Activated T-helper 1 cell treated with anti-CD3 and anti-CD28 coated beads, Interleukin-12 subunit alpha, Interleukin-12 subunit beta, Interleukin-2, Interleukin-4 antibody, amounts not matched to agents 30 ng/mL and 10 ng/mL and 1 ng/mL, durations not matched to agents 14 hours and 24 hours and 36 hours (primary cell): ENCODE measurements at regions of chr11 and their contacts with region 1.

Region 1: GRCh38 chr11:65418711-65419459 is 3.7 kb upstream of the NEAT1 start:
- DNase-seq: peak; percentile 88
- H3K4me3 Mint-ChIP-seq: peak overlapping the region; percentile 99
- H3K27ac Mint-ChIP-seq: peak overlapping the region; percentile 100
- H3K4me1 Mint-ChIP-seq: peaks cover 57% of the 10 kb centered on the region
- H3K27me3 Mint-ChIP-seq: peaks cover 9% of the 10 kb centered on the region

Region 2: GRCh38 chr11:65354265-65355012 is 64.4 kb before region 1 on chr11 and contains the start of gene TIGD3:
- intact Hi-C with region 1: loop called (anchors 1 kb)
- DNase-seq: peak; percentile 93
- H3K4me3 Mint-ChIP-seq: peak within 1 kb of the TSS; percentile 89
- H3K27ac Mint-ChIP-seq: peak within 1 kb of the TSS; percentile 81
- H3K4me1 Mint-ChIP-seq: peaks cover 8% of the 10 kb centered on the region
- H3K27me3 Mint-ChIP-seq: peaks cover 16% of the 10 kb centered on the region
- total RNA-seq, gene TIGD3: 1.1 TPM in 2 replicates

Region 3: GRCh38 chr11:65432686-65433582 is 14.0 kb after region 1 on chr11:
- intact Hi-C with region 1: loop called (anchors 1 kb)
- DNase-seq: no peak
- H3K4me3 Mint-ChIP-seq: peak overlapping the region; percentile 45
- H3K27ac Mint-ChIP-seq: peak overlapping the region; percentile 75
- H3K4me1 Mint-ChIP-seq: peaks cover 91% of the 10 kb centered on the region
- H3K27me3 Mint-ChIP-seq: no peaks in the 10 kb centered on the region

Region 4: GRCh38 chr11:65497141-65498041 is 78.5 kb after region 1 on chr11:
- intact Hi-C with region 1: loop called (anchors 1 kb)
- DNase-seq: peak; percentile 98
- H3K4me3 Mint-ChIP-seq: no peak overlapping the region
- H3K27ac Mint-ChIP-seq: no peak overlapping the region
- H3K4me1 Mint-ChIP-seq: peaks cover 37% of the 10 kb centered on the region
- H3K27me3 Mint-ChIP-seq: no peaks in the 10 kb centered on the region

Region 5: DNA sequence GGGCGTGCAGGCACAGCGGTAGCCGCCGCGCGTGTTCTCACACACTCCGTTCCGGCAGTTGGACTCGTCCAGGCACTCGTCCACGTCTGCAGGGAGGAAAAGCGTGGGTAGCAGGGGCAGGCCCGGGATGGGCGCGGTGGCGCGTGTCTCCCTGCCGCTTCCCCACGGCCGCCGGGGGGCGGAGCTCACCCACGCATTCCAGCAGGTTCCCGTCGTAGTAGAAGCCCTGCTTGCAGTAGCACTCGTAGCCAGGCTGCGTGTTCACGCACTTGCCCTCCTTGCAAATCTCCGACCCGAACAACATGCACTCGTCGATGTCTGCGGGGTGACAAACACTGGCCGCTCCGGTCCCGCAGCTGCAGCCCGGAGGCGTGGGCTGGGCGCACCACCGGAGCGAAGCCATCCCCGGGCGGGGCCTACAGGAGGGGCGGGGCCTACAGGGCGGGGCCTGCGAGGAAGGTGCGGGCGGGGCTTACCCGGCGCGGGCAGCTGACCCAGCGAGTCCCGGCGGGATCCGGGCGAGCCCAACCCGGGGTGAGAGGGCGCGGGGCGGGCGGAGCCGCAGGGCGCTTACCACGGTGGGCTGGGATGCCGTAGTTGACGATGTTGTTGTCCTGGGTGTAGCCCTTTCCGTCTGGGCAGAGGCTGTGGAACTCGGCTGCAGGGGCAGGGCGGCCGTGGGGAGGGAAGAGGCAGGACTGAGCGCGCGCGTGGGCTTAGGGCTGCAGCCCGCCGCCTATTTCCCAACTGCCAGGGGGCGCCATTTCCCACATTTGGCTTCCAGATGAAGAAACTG is 121.6 kb after region 1 on chr11:
- intact Hi-C with region 1: loop called (anchors 1 kb)
- DNase-seq: peak; percentile 86
- H3K4me3 Mint-ChIP-seq: peak overlapping the region; percentile 85
- H3K27ac Mint-ChIP-seq: peak overlapping the region; percentile 88
- H3K4me1 Mint-ChIP-seq: peaks cover 28% of the 10 kb centered on the region
- H3K27me3 Mint-ChIP-seq: no peaks in the 10 kb centered on the region

Region 6: GRCh38 chr11:65773784-65774411 is 355.0 kb after region 1 on chr11:
- intact Hi-C with region 1: no loop called
- DNase-seq: no peak
- H3K4me3 Mint-ChIP-seq: no peak overlapping the region
- H3K27ac Mint-ChIP-seq: peak overlapping the region; percentile 18
- H3K4me1 Mint-ChIP-seq: peaks cover 23% of the 10 kb centered on the region
- H3K27me3 Mint-ChIP-seq: no peaks in the 10 kb centered on the region